OCI-LY7 (cell line): ENCODE measurements at regions of chr9 and their contacts with region 1.

Region 1: GRCh38 chr9:116687074-116687753 is at the start of gene TRIM32:
- DNase-seq: peak; percentile 91
- H3K4me3 ChIP-seq: peak within 1 kb of the TSS; percentile 81
- H3K27ac ChIP-seq: no peak within 1 kb of the TSS
- H3K4me1 ChIP-seq: peaks cover 24% of the 10 kb centered on the region
- CTCF ChIP-seq: no peak
- total RNA-seq, gene TRIM32: 10.6 and 11.4 TPM in 2 replicates

Region 2: DNA sequence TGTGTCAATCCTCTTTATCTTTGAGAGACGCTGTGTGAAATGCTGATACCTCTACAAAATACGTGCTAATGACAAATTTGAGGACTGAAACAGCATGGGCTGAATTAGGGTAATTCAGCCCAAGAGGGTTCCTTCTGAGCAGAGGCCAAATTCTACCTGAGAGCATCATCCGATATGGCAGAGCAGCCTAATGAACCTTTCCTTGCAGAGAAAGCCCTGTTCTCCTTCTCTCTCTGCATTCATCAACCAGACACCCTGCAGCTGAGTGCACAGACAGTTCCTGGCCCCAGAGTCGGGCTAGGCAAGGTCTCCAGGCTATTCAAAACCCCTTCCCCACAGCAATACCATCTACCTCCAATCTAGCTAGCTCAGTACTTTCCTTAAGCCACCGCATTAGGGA is 77.8 kb after region 1 on chr9:
- CTCF ChIA-PET with region 1: no interaction called
- POLR2A ChIA-PET with region 1: interaction called, 19 read pairs
- intact Hi-C with region 1: no loop called
- DNase-seq: no peak
- H3K4me3 ChIP-seq: no peak overlapping the region
- H3K27ac ChIP-seq: peak overlapping the region; percentile 88
- H3K4me1 ChIP-seq: peaks cover 64% of the 10 kb centered on the region
- CTCF ChIP-seq: no peak